Caco-2 (cell line): ENCODE measurements at regions of chr11 and their contacts with region 1.

Region 1: GRCh38 chr11:130145975-130146776 is 13.4 kb upstream of the ST14 start:
- DNase-seq: peak; percentile 98
- H3K4me3 ChIP-seq: no peak overlapping the region
- H3K4me3 Mint-ChIP-seq: peak overlapping the region; percentile 30
- H3K27ac Mint-ChIP-seq: peak overlapping the region; percentile 87
- H3K4me1 ChIP-seq: peaks cover 59% of the 10 kb centered on the region
- H3K4me1 Mint-ChIP-seq: peaks cover 69% of the 10 kb centered on the region
- H3K27me3 ChIP-seq: no peaks in the 10 kb centered on the region
- H3K27me3 Mint-ChIP-seq: no peaks in the 10 kb centered on the region
- CTCF ChIP-seq: peak; percentile 66 to 94

Region 2: DNA sequence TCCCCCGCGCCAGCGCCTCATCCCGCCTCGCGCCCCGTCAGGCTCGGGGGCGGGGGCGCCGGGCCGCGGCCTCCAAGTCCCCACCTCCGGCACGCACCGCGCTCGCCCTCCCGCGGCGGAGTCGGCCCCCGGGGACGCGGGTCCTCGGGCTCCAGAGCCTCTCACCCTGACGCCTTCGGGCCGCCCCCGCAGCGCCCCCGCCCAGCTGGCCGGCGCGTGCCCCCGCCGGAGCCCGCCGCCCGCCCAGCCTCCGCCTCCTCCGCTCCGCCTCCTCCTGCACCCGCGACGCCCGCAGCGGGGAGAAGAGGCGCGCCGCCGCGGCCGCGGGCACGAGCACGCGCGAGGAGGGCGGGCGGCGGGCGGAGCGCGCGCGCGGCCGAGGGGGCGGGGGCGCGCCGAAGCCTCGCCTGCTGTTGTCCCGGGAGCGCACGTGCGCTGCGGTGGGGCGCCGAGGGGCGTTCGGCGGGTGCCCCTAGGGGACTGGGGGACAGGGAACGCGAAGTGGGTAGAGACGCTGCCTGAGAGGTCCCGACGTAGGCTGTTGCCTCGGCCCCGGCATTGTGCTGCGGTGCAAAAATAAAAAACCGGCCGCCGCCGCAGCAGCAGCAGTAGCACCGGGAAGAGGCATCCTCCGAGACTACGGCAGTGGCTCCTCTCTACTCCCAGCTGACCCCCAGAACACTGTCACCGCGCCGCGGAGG is 866.7 kb before region 1 on chr11:
- CTCF ChIA-PET with region 1: no interaction called
- POLR2A ChIA-PET with region 1: no interaction called
- intact Hi-C with region 1: no loop called
- DNase-seq: peak; percentile 94 to 98
- H3K4me3 ChIP-seq: peak overlapping the region; percentile 84
- H3K4me3 Mint-ChIP-seq: peak overlapping the region; percentile 90
- H3K27ac Mint-ChIP-seq: peak overlapping the region; percentile 84
- H3K4me1 ChIP-seq: peaks cover 79% of the 10 kb centered on the region
- H3K4me1 Mint-ChIP-seq: peaks cover 60% of the 10 kb centered on the region
- H3K27me3 ChIP-seq: no peaks in the 10 kb centered on the region
- H3K27me3 Mint-ChIP-seq: no peaks in the 10 kb centered on the region
- CTCF ChIP-seq: peak in 1 of 2 experiments; percentile 38

Region 3: GRCh38 chr11:129895126-129896041 is 250.8 kb before region 1 on chr11 and contains the start of gene NFRKB:
- CTCF ChIA-PET with region 1: no interaction called
- POLR2A ChIA-PET with region 1: interaction called, 4 read pairs
- intact Hi-C with region 1: loop called (anchors 1 kb)
- DNase-seq: peak; percentile 94 to 98
- H3K4me3 ChIP-seq: peak within 1 kb of the TSS; percentile 86
- H3K4me3 Mint-ChIP-seq: peak within 1 kb of the TSS; percentile 84
- H3K27ac Mint-ChIP-seq: peak within 1 kb of the TSS; percentile 80
- H3K4me1 ChIP-seq: peaks cover 14% of the 10 kb centered on the region
- H3K4me1 Mint-ChIP-seq: peaks cover 13% of the 10 kb centered on the region
- H3K27me3 ChIP-seq: no peaks in the 10 kb centered on the region
- H3K27me3 Mint-ChIP-seq: no peaks in the 10 kb centered on the region
- CTCF ChIP-seq: no peak
- total RNA-seq, gene NFRKB: 101 and 104 TPM in 2 replicates

Region 4: DNA sequence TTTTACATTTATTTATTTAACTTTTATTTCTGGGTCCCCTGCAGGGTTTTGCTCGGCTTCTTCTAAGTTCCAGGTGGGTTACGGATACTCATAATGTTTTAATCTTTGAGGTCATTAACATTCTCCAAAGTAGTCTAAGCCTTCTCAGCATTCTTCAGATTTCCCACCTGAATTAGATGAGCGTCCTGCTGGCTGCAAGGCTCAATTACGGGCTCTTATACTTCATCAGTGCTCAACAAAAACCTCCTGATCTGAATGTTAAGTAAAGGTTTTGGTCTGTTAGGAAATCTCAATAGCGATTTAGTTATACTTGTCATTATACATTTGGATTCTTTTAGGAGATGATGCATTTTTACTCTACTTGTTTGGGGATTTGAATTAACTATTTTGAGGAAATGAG is 223.5 kb before region 1 on chr11:
- CTCF ChIA-PET with region 1: interaction called, 30 read pairs
- POLR2A ChIA-PET with region 1: no interaction called
- intact Hi-C with region 1: loop called (anchors 1 kb)
- DNase-seq: peak in 1 of 2 experiments; percentile 29
- H3K4me3 ChIP-seq: no peak overlapping the region
- H3K4me3 Mint-ChIP-seq: no peak overlapping the region
- H3K27ac Mint-ChIP-seq: no peak overlapping the region
- H3K4me1 ChIP-seq: peaks cover 5% of the 10 kb centered on the region
- H3K4me1 Mint-ChIP-seq: peaks cover 6% of the 10 kb centered on the region
- H3K27me3 ChIP-seq: no peaks in the 10 kb centered on the region
- H3K27me3 Mint-ChIP-seq: no peaks in the 10 kb centered on the region
- CTCF ChIP-seq: peak in 1 of 2 experiments; percentile 35

Region 5: DNA sequence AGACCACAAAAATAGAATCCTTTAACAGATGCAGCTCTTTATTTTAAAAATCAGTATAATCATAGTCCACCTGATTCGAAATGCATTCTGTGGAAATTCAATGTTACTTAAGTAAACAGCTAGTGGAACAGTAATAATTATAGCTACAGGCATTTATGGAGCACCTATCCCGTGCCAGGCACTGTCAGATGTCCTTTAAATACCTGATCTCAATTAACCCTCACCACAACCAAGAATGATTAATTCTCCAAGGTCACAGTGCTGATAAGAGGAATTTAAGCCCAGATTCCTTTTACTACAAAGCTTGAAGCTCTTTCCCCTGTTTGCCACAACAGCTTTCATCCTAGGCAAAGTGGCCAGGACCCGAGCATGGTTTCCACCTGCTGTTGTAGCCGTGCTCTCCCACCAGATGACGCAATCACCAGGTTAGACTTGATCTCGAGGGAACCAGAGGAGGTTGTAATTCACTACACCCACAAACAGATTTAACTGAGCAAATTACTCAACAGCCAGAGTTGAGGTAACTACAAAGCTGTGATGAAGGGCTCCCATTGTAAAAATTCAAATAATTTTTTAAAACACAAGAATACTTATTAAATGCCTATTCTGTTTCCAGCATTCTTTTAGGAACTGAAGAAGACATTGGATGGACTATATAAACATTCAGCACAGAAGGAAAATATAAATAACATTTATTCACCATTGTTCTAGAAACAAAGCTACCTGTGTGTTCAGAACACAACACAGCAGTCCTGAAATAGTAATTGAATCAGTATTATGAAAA is 153.8 kb before region 1 on chr11:
- CTCF ChIA-PET with region 1: interaction called, 15 read pairs
- POLR2A ChIA-PET with region 1: no interaction called
- intact Hi-C with region 1: no loop called
- DNase-seq: peak; percentile 80 to 82
- H3K4me3 ChIP-seq: no peak overlapping the region
- H3K4me3 Mint-ChIP-seq: no peak overlapping the region
- H3K27ac Mint-ChIP-seq: peak overlapping the region; percentile 35
- H3K4me1 ChIP-seq: peaks cover 13% of the 10 kb centered on the region
- H3K4me1 Mint-ChIP-seq: peaks cover 28% of the 10 kb centered on the region
- H3K27me3 ChIP-seq: no peaks in the 10 kb centered on the region
- H3K27me3 Mint-ChIP-seq: no peaks in the 10 kb centered on the region
- CTCF ChIP-seq: peak in 1 of 2 experiments; percentile 84

Region 6: GRCh38 chr11:130181295-130182272 is 35.4 kb after region 1 on chr11:
- CTCF ChIA-PET with region 1: interaction called, 45 read pairs
- POLR2A ChIA-PET with region 1: interaction called, 16 read pairs
- intact Hi-C with region 1: loop called (anchors 1 kb)
- DNase-seq: peak; percentile 94 to 99
- H3K4me3 ChIP-seq: peak overlapping the region; percentile 32
- H3K4me3 Mint-ChIP-seq: peak overlapping the region; percentile 58
- H3K27ac Mint-ChIP-seq: peak overlapping the region; percentile 92
- H3K4me1 ChIP-seq: peaks cover 56% of the 10 kb centered on the region
- H3K4me1 Mint-ChIP-seq: peaks cover 56% of the 10 kb centered on the region
- H3K27me3 ChIP-seq: no peaks in the 10 kb centered on the region
- H3K27me3 Mint-ChIP-seq: no peaks in the 10 kb centered on the region
- CTCF ChIP-seq: peak in 1 of 2 experiments; percentile 8

Region 7: DNA sequence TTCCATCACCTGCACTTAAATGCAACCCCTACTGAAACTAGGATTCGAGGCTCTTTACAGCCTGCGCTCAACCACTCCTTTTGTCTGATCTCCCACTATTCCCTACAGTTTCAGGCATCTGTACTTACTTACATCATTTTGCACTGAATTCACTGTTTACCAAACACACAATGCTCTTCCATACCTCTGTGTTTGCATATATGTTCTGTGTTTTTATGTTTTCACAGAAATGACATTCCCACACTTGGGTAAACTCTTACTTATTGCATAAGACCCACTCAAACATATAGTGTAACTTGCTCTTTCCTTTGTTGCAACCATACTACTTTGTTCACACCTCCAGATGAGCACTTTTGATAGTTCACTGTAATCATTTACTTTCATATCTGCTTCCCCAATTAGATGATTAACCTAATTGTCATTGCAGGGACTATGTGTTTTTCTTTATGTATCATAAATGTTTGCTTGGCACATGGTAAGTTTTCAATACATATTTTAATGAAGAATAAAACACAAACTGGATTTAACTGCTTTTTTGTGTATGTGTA is 114.0 kb after region 1 on chr11:
- CTCF ChIA-PET with region 1: no interaction called
- POLR2A ChIA-PET with region 1: no interaction called
- intact Hi-C with region 1: no loop called
- DNase-seq: no peak
- H3K4me3 ChIP-seq: no peak overlapping the region
- H3K4me3 Mint-ChIP-seq: no peak overlapping the region
- H3K27ac Mint-ChIP-seq: no peak overlapping the region
- H3K4me1 ChIP-seq: no peaks in the 10 kb centered on the region
- H3K4me1 Mint-ChIP-seq: no peaks in the 10 kb centered on the region
- H3K27me3 ChIP-seq: no peaks in the 10 kb centered on the region
- H3K27me3 Mint-ChIP-seq: no peaks in the 10 kb centered on the region
- CTCF ChIP-seq: no peak